ENCODE measurements at regions of chr19 and their contacts with region 1.

Region 1: GRCh38 chr19:3336680-3337523 is 29.5 kb upstream of the NFIC start:
- DNase-seq: peak; percentile 99
- H3K4me3 ChIP-seq: no peak overlapping the region
- H3K27ac ChIP-seq: peak overlapping the region; percentile 93 to 99 (median 97)
- H3K4me1 ChIP-seq: peaks cover 0 to 64% (median 58%) of the 10 kb centered on the region in 4 donors
- H3K27me3 ChIP-seq: no peaks in the 10 kb centered on the region
- CTCF ChIP-seq: no peak
- EP300 ChIP-seq: peak; percentile 95 to 99 (median 98)
- POLR2A ChIP-seq: peak in 1 of 2 donors; percentile 28

Region 2: GRCh38 chr19:3359015-3359918 is 22.4 kb after region 1 on chr19:
- intact Hi-C with region 1: loop called (anchors 2 kb)
- DNase-seq: peak; percentile 88
- H3K4me3 ChIP-seq: peak overlapping the region; percentile 97 to 100 (median 100)
- H3K27ac ChIP-seq: peak overlapping the region; percentile 99 to 100 (median 100)
- H3K4me1 ChIP-seq: peaks cover 0 to 46% (median 41%) of the 10 kb centered on the region in 4 donors
- H3K27me3 ChIP-seq: no peaks in the 10 kb centered on the region
- CTCF ChIP-seq: no peak
- EP300 ChIP-seq: no peak
- POLR2A ChIP-seq: peak; percentile 15 to 54

Region 3: GRCh38 chr19:3375221-3376090 is 38.6 kb after region 1 on chr19:
- intact Hi-C with region 1: loop called (anchors 5 kb)
- DNase-seq: peak; percentile 96
- H3K4me3 ChIP-seq: peak overlapping the region; percentile 20 to 31 (median 26)
- H3K27ac ChIP-seq: peak overlapping the region; percentile 98 to 100 (median 100)
- H3K4me1 ChIP-seq: peaks cover 0 to 92% (median 84%) of the 10 kb centered on the region in 4 donors
- H3K27me3 ChIP-seq: no peaks in the 10 kb centered on the region
- CTCF ChIP-seq: no peak
- EP300 ChIP-seq: peak in 2 of 4 donors; percentile 19 to 27
- POLR2A ChIP-seq: no peak

Region 4: GRCh38 chr19:3409346-3410064 is 72.6 kb after region 1 on chr19:
- intact Hi-C with region 1: loop called (anchors 1 kb)
- DNase-seq: peak; percentile 98
- H3K4me3 ChIP-seq: peak overlapping the region; percentile 25 to 46 (median 40)
- H3K27ac ChIP-seq: peak overlapping the region; percentile 98 to 100 (median 98)
- H3K4me1 ChIP-seq: peaks cover 0 to 91% (median 83%) of the 10 kb centered on the region in 4 donors
- H3K27me3 ChIP-seq: no peaks in the 10 kb centered on the region
- CTCF ChIP-seq: no peak
- EP300 ChIP-seq: peak; percentile 100
- POLR2A ChIP-seq: peak; percentile 36 to 40